ENCODE measurements at regions of chr5 and their contacts with region 1.

Region 1: GRCh38 chr5:122985954-122986721 is 50.4 kb downstream of the PPIC start:
- DNase-seq: no peak
- H3K4me3 Mint-ChIP-seq: no peak overlapping the region
- H3K27ac Mint-ChIP-seq: no peak overlapping the region
- H3K4me1 Mint-ChIP-seq: no peaks in the 10 kb centered on the region
- H3K27me3 Mint-ChIP-seq: no peaks in the 10 kb centered on the region

Region 2: GRCh38 chr5:121497176-121497575 is 1489.0 kb before region 1 on chr5:
- CTCF ChIA-PET with region 1: no interaction called
- POLR2A ChIA-PET with region 1: no interaction called
- intact Hi-C with region 1: no loop called
- DNase-seq: no peak
- H3K4me3 Mint-ChIP-seq: no peak overlapping the region
- H3K27ac Mint-ChIP-seq: no peak overlapping the region
- H3K4me1 Mint-ChIP-seq: no peaks in the 10 kb centered on the region
- H3K27me3 Mint-ChIP-seq: no peaks in the 10 kb centered on the region

Region 3: DNA sequence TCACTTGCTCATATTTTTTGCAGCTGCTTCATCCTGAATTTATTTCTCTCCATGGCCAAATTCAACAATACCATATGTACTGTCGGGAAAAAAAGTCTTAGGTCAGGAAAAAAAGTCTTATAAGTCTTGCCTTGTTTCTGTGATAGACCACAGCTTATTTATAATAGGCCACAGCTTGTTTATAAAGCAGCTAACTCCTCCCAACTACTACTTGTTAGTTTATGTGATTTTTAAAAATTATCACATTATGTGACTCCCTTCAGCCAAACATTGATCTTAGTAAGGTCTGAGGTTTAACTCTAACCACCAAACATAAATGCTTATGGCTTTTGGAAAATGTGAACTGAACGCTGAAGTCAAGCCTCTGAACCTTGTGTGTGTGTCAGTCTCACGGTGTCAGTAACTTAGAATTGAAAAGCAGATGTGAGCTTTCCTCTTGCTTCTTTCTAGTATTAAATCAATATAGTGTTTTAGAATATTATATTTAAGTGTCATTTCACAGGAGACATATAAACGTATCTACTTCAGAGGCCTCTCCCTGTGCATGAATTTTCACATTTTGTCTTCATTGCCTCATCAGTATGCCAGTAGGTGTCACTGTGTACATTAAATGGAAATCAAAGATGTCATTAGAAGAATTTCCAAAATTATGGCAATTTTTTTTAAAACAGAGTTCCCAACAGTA is 89.4 kb before region 1 on chr5:
- CTCF ChIA-PET with region 1: no interaction called
- POLR2A ChIA-PET with region 1: no interaction called
- intact Hi-C with region 1: loop called (anchors 10 kb)
- DNase-seq: no peak
- H3K4me3 Mint-ChIP-seq: no peak overlapping the region
- H3K27ac Mint-ChIP-seq: no peak overlapping the region
- H3K4me1 Mint-ChIP-seq: peaks cover 2% of the 10 kb centered on the region
- H3K27me3 Mint-ChIP-seq: no peaks in the 10 kb centered on the region

Region 4: DNA sequence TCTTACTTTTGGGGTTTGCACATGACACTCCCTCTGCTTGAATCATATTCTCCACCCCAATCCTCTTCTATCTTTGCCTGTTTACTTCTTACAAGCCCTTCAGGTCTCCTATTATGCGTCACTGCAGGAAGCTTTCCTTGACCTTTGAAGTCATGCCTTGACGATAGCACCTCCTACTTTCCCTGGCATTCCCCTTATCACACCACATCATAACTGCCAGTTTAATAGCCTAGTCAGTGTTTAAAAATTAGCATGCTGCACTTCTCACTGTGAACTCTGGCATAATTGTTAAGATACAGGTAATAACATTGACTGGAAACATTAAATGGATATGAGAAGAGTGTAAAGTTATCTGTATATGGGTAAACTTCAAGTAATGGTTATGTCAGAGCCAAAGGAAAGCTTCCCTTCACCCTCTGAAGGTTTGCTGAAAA is 474.2 kb after region 1 on chr5:
- CTCF ChIA-PET with region 1: no interaction called
- POLR2A ChIA-PET with region 1: no interaction called
- intact Hi-C with region 1: no loop called
- DNase-seq: peak; percentile 61
- H3K4me3 Mint-ChIP-seq: no peak overlapping the region
- H3K27ac Mint-ChIP-seq: peak overlapping the region; percentile 87
- H3K4me1 Mint-ChIP-seq: peaks cover 17% of the 10 kb centered on the region
- H3K27me3 Mint-ChIP-seq: no peaks in the 10 kb centered on the region

Measured in activated CD4-positive, alpha-beta memory T cell treated with anti-CD3 and anti-CD28 coated beads for 36 hours (primary cell).